Activated CD8-positive, alpha-beta memory T cell treated with anti-CD3 and anti-CD28 coated beads, Interleukin-2, amount 10 ng/mL, durations not matched to agents 7 days and 5 days (primary cell): ENCODE measurements at regions of chr9 and their contacts with region 1.

Region 1: GRCh38 chr9:130128733-130129431 is 43.3 kb upstream of the NCS1 start:
- DNase-seq: peak; percentile 81
- ATAC-seq: peak; percentile 83
- H3K4me3 Mint-ChIP-seq: peak overlapping the region; percentile 62
- H3K27ac Mint-ChIP-seq: peak overlapping the region; percentile 99
- H3K4me1 Mint-ChIP-seq: peaks cover 51% of the 10 kb centered on the region
- H3K27me3 Mint-ChIP-seq: no peaks in the 10 kb centered on the region

Region 2: DNA sequence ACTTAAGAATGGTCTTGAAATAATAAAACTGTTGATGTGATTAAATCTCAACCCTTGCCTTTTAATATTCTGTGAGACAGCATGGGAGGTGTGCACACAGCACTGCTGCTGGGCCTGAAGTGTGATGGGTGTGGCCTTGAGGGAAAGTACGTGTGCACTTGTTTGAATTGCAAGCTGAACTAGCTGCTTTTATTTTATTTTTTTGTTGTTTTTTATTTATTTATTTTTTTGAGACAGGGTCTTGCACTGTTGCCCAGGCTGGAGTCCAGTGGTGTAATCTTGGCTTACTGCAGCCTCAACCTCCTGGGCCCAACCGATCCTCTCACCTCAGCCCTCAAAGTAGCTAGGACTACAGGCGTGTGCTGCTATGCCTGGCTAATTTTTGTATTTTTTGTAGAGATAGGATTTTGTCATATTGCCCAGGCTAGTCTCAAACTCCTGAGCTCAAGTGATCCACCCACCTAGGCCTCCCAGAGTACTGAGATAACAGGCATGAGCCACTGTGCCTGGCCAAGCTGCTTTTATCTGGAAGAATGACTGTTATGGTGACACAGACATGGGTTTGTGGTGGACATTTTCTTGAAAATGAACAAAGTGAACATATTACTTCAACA is 16.2 kb before region 1 on chr9:
- CTCF ChIA-PET with region 1: interaction called, 28 read pairs
- DNase-seq: no peak
- ATAC-seq: no peak
- H3K4me3 Mint-ChIP-seq: no peak overlapping the region
- H3K27ac Mint-ChIP-seq: peak overlapping the region; percentile 19
- H3K4me1 Mint-ChIP-seq: peaks cover 32% of the 10 kb centered on the region
- H3K27me3 Mint-ChIP-seq: no peaks in the 10 kb centered on the region

Region 3: GRCh38 chr9:130235897-130236668 is 107.2 kb after region 1 on chr9:
- CTCF ChIA-PET with region 1: interaction called, 13 read pairs
- DNase-seq: peak; percentile 77
- ATAC-seq: peak; percentile 41
- H3K4me3 Mint-ChIP-seq: no peak overlapping the region
- H3K27ac Mint-ChIP-seq: peak overlapping the region; percentile 49
- H3K4me1 Mint-ChIP-seq: peaks cover 26% of the 10 kb centered on the region
- H3K27me3 Mint-ChIP-seq: no peaks in the 10 kb centered on the region